ENCODE measurements at regions of chr4 and their contacts with region 1.

Region 1: GRCh38 chr4:187464573-187464972 is 531.0 kb upstream of the ZFP42 start:
- DNase-seq: no peak
- ATAC-seq: no peak
- H3K4me3 ChIP-seq: no peak overlapping the region
- H3K27ac ChIP-seq: no peak overlapping the region
- H3K4me1 ChIP-seq: no peaks in the 10 kb centered on the region
- H3K27me3 ChIP-seq: no peaks in the 10 kb centered on the region
- CTCF ChIP-seq: no peak

Region 2: GRCh38 chr4:187491959-187492358 is 27.4 kb after region 1 on chr4:
- CTCF ChIA-PET with region 1: no interaction called
- POLR2A ChIA-PET with region 1: interaction called, 18 read pairs
- in situ Hi-C with region 1: no loop called
- intact Hi-C with region 1: no loop called
- DNase-seq: no peak
- ATAC-seq: no peak
- H3K4me3 ChIP-seq: no peak overlapping the region
- H3K27ac ChIP-seq: no peak overlapping the region
- H3K4me1 ChIP-seq: no peaks in the 10 kb centered on the region
- H3K27me3 ChIP-seq: no peaks in the 10 kb centered on the region
- CTCF ChIP-seq: no peak